CD8-positive, alpha-beta T cell (primary cell): ENCODE measurements at regions of chr5 and their contacts with region 1.

Region 1: DNA sequence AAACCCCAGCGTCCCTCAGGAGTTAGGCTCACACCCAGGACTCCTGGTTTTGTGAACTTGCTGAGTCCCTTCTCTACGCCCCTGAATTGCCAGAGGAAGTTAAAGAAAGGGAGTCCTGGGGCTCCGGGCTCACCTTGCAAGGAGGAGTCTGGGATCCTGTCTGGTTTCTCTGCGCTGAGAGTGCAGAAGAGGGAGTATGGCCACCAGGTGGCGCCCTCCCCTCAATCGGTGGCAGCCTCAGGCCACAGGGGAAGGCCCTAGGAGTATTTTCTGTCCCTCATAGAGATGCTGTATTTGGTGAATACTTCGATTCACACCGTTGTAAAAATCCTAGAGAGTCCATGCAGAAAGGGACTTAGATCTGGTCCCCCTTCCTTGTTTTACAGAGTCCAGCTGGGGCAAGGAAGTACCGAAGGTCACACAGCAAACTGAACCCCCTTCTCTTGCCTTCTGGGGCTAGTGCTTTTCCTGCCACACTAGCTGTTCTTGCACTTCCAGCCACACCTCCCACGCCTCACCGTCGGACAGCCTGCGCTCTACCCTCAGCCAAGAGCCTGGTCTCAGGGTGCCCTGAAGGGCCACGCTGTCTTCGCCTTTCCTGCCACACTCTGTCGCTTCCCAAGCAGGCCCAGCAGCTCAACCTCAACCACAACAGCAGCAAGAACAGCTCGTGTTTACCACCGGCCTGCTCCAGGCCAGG is 10.2 kb downstream of the HAND1 start:
- DNase-seq: peak; percentile 39 to 80 (median 74)
- ATAC-seq: peak; percentile 80
- H3K4me3 ChIP-seq: no peak overlapping the region
- H3K4me3 Mint-ChIP-seq: no peak overlapping the region
- H3K27ac ChIP-seq: no peak overlapping the region
- H3K27ac Mint-ChIP-seq: no peak overlapping the region
- H3K4me1 ChIP-seq: no peaks in the 10 kb centered on the region
- H3K4me1 Mint-ChIP-seq: peaks cover 9% of the 10 kb centered on the region
- H3K27me3 ChIP-seq: peaks cover 9 to 14% of the 10 kb centered on the region in 2 experiments
- H3K27me3 Mint-ChIP-seq: peaks cover 36% of the 10 kb centered on the region
- CTCF ChIP-seq: peak; percentile 81

Region 2: GRCh38 chr5:154421868-154422267 is 45.9 kb before region 1 on chr5:
- CTCF ChIA-PET with region 1: interaction called, 38 read pairs
- POLR2A ChIA-PET with region 1: no interaction called
- intact Hi-C with region 1: no loop called
- DNase-seq: peak in 3 of 9 experiments; percentile 23 to 49 (median 34)
- ATAC-seq: no peak
- H3K4me3 ChIP-seq: no peak overlapping the region
- H3K4me3 Mint-ChIP-seq: no peak overlapping the region
- H3K27ac ChIP-seq: no peak overlapping the region
- H3K27ac Mint-ChIP-seq: no peak overlapping the region
- H3K4me1 ChIP-seq: no peaks in the 10 kb centered on the region
- H3K4me1 Mint-ChIP-seq: peaks cover 4% of the 10 kb centered on the region
- H3K27me3 ChIP-seq: no peaks in the 10 kb centered on the region
- H3K27me3 Mint-ChIP-seq: no peaks in the 10 kb centered on the region
- CTCF ChIP-seq: no peak

Region 3: DNA sequence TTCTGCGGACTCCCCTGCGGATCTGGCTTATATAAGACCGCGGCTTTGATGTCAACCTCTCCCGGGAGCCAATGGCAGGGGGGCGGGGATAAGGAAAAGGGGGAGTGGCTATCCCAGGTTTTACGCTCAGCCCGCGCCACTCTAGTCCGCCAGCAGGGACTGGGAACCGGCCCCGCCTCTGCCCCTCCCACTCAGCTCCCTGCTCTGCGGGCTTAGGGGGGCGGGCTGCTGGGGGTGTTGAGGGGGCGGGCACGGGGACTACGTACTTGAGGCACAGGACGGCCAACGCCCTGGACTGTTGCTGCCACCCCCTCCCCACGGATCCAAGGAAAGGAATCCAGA is 10.4 kb after region 1 on chr5 and contains the start of gene HAND1:
- CTCF ChIA-PET with region 1: interaction called, 11 read pairs
- POLR2A ChIA-PET with region 1: no interaction called
- intact Hi-C with region 1: no loop called
- DNase-seq: no peak
- ATAC-seq: no peak
- H3K4me3 ChIP-seq: no peak within 1 kb of the TSS
- H3K4me3 Mint-ChIP-seq: peak within 1 kb of the TSS; percentile 65
- H3K27ac ChIP-seq: no peak within 1 kb of the TSS
- H3K27ac Mint-ChIP-seq: no peak within 1 kb of the TSS
- H3K4me1 ChIP-seq: peaks cover 61% of the 10 kb centered on the region
- H3K4me1 Mint-ChIP-seq: peaks cover 62% of the 10 kb centered on the region
- H3K27me3 ChIP-seq: peaks cover 49 to 83% of the 10 kb centered on the region in 2 experiments
- H3K27me3 Mint-ChIP-seq: peaks cover 83% of the 10 kb centered on the region
- CTCF ChIP-seq: no peak
- total RNA-seq, gene HAND1: not detected

Region 4: DNA sequence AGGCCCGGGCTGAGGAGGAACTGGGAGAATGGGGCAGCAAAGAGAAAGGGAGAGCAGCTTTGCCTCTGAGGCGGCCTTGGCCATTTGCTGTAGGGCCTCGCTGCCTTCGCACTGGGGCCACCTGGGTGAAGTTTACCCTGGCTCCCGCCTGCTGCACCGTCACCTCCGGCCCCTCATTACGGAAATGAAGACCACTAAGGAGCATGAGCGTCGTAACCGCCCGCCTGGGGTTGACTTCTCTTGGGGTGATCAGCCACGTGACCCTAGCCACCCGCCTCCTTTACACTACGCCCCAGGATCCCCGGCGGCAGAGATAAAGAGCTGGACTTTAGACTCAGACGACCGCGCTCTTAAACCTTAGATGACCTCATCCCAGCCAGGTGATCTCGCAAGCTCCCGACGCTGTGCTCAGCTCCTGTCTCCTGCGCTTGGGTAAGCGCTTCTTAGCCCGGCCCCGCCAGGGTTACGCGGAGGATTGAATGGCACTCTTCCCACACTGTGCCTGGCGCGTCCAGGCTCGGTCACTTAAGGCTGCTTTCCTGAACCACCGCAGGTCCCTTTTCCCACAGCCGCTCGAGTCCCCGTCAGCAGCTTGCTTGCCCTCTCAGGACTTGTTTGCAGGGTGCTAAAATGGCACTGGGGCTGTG is 179.4 kb after region 1 on chr5:
- CTCF ChIA-PET with region 1: interaction called, 3 read pairs
- POLR2A ChIA-PET with region 1: no interaction called
- intact Hi-C with region 1: loop called (anchors 2 to 10 kb)
- DNase-seq: peak in 8 of 9 experiments; percentile 9 to 70 (median 39)
- ATAC-seq: peak; percentile 68
- H3K4me3 ChIP-seq: peak overlapping the region; percentile 53 to 75
- H3K4me3 Mint-ChIP-seq: peak overlapping the region; percentile 89
- H3K27ac ChIP-seq: peak overlapping the region in 1 of 2 experiments; percentile 1
- H3K27ac Mint-ChIP-seq: peak overlapping the region; percentile 66
- H3K4me1 ChIP-seq: peaks cover 6% of the 10 kb centered on the region
- H3K4me1 Mint-ChIP-seq: peaks cover 15% of the 10 kb centered on the region
- H3K27me3 ChIP-seq: no peaks in the 10 kb centered on the region
- H3K27me3 Mint-ChIP-seq: no peaks in the 10 kb centered on the region
- CTCF ChIP-seq: no peak

Region 5: GRCh38 chr5:155147222-155147621 is 679.4 kb after region 1 on chr5:
- CTCF ChIA-PET with region 1: no interaction called
- POLR2A ChIA-PET with region 1: no interaction called
- intact Hi-C with region 1: loop called in 1 of 2 experiments (anchors 5 kb)
- DNase-seq: no peak
- ATAC-seq: no peak
- H3K4me3 ChIP-seq: no peak overlapping the region
- H3K4me3 Mint-ChIP-seq: no peak overlapping the region
- H3K27ac ChIP-seq: no peak overlapping the region
- H3K27ac Mint-ChIP-seq: no peak overlapping the region
- H3K4me1 ChIP-seq: no peaks in the 10 kb centered on the region
- H3K4me1 Mint-ChIP-seq: no peaks in the 10 kb centered on the region
- H3K27me3 ChIP-seq: peaks cover 0 to 2% of the 10 kb centered on the region in 2 experiments
- H3K27me3 Mint-ChIP-seq: no peaks in the 10 kb centered on the region
- CTCF ChIP-seq: no peak